ENCODE measurements at regions of chr2 and their contacts with region 1.

Region 1: GRCh38 chr2:158882297-158882696 is 86.1 kb upstream of the TANC1 start:
- DNase-seq: no peak
- ATAC-seq: no peak
- H3K4me3 Mint-ChIP-seq: no peak overlapping the region
- H3K27ac Mint-ChIP-seq: no peak overlapping the region
- H3K4me1 Mint-ChIP-seq: no peaks in the 10 kb centered on the region
- H3K27me3 Mint-ChIP-seq: peaks cover 8% of the 10 kb centered on the region
- CTCF ChIP-seq: no peak

Region 2: GRCh38 chr2:157233506-157233905 is 1648.8 kb before region 1 on chr2:
- CTCF ChIA-PET with region 1: no interaction called
- POLR2A ChIA-PET with region 1: no interaction called
- intact Hi-C with region 1: loop called (anchors 5 kb)
- DNase-seq: no peak
- ATAC-seq: no peak
- H3K4me3 Mint-ChIP-seq: no peak overlapping the region
- H3K27ac Mint-ChIP-seq: no peak overlapping the region
- H3K4me1 Mint-ChIP-seq: no peaks in the 10 kb centered on the region
- H3K27me3 Mint-ChIP-seq: peaks cover 10% of the 10 kb centered on the region
- CTCF ChIP-seq: no peak

Measured in activated B cell treated with CpG ODN at 0.5 μM for 24 hours (primary cell).